ENCODE measurements at regions of chr10 and their contacts with region 1.

Region 1: GRCh38 chr10:99845837-99846382 is 63.5 kb downstream of the ABCC2 start:
- DNase-seq: peak; percentile 77 to 95
- H3K4me3 ChIP-seq: peak overlapping the region; percentile 25 to 39 (median 32)
- H3K27ac ChIP-seq: peak overlapping the region in 3 of 5 donors; percentile 23 to 35 (median 30)
- H3K4me1 ChIP-seq: peaks cover 0 to 23% (median 8%) of the 10 kb centered on the region in 4 donors
- H3K27me3 ChIP-seq: no peaks in the 10 kb centered on the region
- CTCF ChIP-seq: peak in 5 of 7 experiments; percentile 86 to 97 (median 95)
- EP300 ChIP-seq: no peak
- POLR2A ChIP-seq: no peak

Region 2: DNA sequence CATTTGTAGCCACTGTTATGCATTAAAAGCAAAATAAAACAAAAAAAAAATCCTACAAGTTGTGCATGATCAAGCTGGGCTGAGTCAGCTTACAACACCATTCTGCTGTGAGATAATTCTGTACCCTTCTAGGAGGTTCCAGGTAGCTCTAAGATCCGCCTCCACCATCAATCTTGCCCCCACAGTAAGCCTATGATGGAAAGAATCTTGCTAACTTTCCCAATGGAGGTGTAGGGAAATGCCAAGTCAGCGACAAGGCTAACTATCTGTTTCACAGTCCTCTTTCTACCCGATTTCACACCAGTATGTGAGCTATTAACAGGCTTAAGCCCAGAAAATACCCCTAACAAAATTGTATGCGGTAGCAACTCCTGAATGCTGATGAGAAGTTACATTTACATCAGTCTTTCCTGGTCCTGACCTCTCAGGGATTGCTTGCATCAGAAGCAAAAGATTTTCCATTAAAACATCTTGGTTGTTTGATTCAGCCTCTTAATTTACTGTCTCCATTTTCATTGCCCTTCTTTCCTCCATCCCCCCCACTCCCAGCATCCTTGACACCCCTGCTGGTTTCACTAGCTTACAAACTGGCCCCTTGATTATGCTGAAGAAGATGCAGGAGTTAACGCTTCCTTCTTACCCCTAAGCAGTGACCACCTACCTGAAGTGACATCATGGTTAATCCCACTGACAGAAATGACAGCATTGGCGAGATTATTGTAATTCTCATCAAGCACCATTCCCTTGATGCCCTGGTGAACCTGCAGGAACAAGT is 208.0 kb after region 1 on chr10:
- intact Hi-C with region 1: loop called (anchors 5 kb)
- DNase-seq: no peak
- H3K4me3 ChIP-seq: no peak overlapping the region
- H3K27ac ChIP-seq: no peak overlapping the region
- H3K4me1 ChIP-seq: no peaks in the 10 kb centered on the region
- H3K27me3 ChIP-seq: no peaks in the 10 kb centered on the region
- CTCF ChIP-seq: no peak
- EP300 ChIP-seq: no peak
- POLR2A ChIP-seq: no peak

Measured in stomach (tissue), 19 donors.